ENCODE measurements at regions of chr9 and their contacts with region 1.

Region 1: GRCh38 chr9:127734747-127735529 is at the start of gene TOR2A:
- DNase-seq: peak; percentile 96 to 100 (median 98)

Region 2: DNA sequence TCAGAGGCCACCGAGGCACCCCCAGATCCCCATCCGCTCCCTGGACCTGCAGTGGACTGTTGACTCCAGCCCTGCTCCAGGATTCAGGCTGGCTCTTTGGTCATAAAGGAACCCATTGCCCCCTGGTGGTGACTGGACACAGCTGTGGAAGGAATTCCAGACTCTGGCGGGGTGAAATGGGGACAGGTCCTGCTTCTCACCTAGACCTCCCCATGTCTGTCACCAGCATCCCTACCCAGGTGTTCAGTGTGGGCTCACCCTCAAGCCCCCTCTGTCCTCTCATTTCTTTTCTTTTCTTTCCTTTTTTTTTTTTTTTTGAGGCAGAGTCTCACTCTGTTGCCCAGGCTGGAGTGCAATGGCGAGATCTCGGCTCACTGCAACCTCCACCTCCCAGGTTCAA is 148.4 kb before region 1 on chr9:
- intact Hi-C with region 1: loop called (anchors 1 kb)
- DNase-seq: peak in 9 of 10 donors; percentile 56 to 95 (median 80)

Region 3: GRCh38 chr9:127611899-127612790 is 122.8 kb before region 1 on chr9 and contains the start of gene STXBP1:
- intact Hi-C with region 1: loop called (anchors 5 kb)
- DNase-seq: peak; percentile 86 to 99 (median 90)

Region 4: DNA sequence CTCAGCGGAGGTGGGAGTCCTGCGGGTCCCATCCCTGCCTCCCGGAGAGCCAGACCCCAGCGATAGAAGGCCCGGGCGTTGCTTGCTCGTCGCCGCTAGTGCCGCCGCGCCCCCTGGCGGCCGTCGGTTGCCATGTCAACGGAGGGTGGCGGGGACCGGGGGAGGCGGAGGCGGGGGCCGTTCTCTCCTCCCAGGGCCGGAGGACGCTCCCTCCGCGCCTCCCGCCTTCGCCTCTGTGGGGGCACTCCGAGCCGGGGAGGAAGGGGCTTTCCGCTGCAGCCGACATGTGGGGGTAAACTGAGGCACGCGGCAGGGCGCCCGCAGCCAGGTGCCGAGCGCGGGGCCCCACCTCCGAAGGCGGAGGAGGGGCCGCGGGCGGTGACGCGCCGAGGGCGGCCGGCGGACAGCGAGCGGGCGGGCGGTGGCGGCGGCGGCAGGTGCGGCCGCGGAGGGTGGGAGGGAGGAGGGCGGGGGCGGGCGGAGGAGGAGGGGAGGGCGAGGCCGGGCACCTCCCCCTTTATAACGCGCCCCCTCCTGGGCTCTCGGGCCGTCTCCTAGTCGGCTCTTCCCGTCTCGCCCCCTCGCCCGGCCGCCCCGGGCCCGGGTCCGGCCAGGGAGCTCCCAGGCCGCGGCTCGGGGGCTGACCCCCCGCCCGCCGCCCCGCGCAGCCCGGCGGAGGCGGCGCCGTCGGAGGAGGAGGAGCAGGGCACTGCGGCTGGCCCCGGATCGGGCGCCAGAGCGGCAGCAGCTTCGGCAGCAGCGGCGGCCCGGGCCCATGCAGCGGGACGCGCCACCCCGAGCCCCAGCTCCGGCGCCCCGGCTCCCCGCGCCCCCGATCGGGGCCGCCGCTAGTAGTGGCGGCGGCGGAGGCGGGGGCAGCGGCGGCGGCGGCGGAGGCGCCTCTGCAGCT is 50.3 kb after region 1 on chr9:
- intact Hi-C with region 1: loop called (anchors 1 kb)
- DNase-seq: peak; percentile 77 to 97 (median 86)

Region 5: DNA sequence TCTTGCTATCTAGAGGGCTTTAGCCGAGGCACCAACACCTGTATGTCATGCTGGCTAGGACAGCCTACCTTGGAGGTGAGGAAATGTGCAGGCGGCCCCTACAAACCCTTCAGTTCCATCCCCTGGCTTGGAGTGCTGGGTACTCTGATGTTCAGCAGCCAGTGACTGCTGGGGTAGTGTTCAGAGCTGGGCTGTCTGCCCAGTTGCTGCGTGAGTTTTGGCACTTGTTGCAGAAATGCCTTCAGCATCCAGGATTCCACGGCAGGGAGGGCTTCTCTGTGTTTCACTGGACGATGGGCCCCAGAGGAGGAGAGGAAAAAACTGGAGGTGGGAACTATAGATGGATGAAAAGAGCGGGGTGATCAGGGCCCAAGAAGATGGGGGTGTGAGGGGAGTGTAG is 551.5 kb after region 1 on chr9:
- intact Hi-C with region 1: no loop called
- DNase-seq: peak; percentile 64 to 97 (median 80)

Measured in posterior cingulate gyrus (tissue), 11 donors.